Adrenal gland (tissue), 19 donors: ENCODE measurements at regions of chr10 and their contacts with region 1.

Region 1: GRCh38 chr10:98467506-98468346 is 21.0 kb upstream of the HPS1 start:
- DNase-seq: peak; percentile 71 to 86 (median 79)
- H3K4me3 ChIP-seq: peak overlapping the region in 2 of 4 donors; percentile 7 to 70
- H3K27ac ChIP-seq: no peak overlapping the region
- H3K4me1 ChIP-seq: peaks cover 6% of the 10 kb centered on the region in 2 donors
- H3K27me3 ChIP-seq: no peaks in the 10 kb centered on the region
- CTCF ChIP-seq: peak; percentile 63 to 91 (median 85)
- POLR2A ChIP-seq: no peak

Region 2: DNA sequence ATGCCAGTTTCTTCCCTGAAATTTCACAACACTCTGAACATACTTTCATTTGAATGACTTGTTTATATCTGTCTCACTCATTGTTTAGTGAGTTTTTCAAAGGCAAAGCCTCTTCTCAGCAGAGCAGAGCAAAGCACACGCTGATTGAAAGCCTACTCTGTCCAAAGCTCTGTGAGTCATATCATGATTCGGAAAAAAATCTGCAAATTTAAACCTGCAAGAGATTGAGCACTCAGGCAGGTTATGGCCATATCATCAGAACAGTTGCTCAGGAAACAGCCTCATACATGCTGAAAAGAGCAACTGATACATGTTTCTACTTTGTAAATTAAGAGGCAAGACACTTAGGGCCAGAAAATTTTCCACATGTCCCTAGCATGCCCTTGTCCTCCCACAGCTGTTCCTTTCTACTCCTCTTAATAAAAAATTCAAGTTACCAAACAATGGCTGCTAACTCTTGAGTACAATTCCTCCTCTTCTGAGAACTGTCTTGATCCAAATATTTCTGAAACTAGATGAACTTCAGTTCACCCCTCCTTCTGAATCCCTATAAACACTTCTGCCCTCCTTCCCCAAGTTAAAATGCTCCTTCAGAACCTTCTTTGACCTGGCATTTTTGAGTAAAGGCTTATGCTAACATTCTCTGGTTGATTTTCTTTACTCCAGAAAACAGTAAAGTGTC is 119.6 kb after region 1 on chr10:
- intact Hi-C with region 1: no loop called
- DNase-seq: no peak
- H3K4me3 ChIP-seq: no peak overlapping the region
- H3K27ac ChIP-seq: peak overlapping the region in 2 of 5 donors; percentile 6 to 71
- H3K4me1 ChIP-seq: no peaks in the 10 kb centered on the region
- H3K27me3 ChIP-seq: no peaks in the 10 kb centered on the region
- CTCF ChIP-seq: no peak
- POLR2A ChIP-seq: no peak

Region 3: DNA sequence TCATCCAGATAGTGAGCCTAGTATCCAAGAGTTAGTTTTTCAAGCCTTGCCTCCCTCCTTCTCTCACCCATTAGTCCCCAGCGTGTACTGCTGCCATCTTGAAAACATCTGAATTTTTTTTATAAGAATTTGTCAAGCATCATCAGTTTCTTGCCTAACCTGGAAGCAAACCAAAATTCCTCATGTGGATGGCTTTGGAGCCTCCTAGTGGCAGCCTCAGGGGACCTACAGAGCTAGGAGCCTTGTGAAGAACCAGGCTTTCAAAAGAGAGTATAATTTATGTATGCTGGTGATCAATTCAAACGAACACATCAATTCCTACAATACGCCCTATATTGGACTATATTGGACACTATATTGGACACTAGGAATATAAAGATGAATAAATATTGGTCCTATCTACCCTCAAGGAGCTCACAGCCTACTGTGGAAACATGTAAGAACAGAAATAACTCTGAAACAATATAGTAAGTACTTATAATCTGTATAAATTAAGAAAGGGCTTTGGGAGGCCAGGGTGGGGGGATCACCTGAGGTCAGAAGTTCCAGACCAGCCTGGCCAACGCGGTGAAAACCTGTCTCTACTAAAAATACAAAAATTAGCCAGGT is 704.5 kb after region 1 on chr10:
- intact Hi-C with region 1: loop called in 1 of 2 experiments (anchors 10 kb)
- DNase-seq: peak; percentile 25 to 75 (median 33)
- H3K4me3 ChIP-seq: no peak overlapping the region
- H3K27ac ChIP-seq: no peak overlapping the region
- H3K4me1 ChIP-seq: no peaks in the 10 kb centered on the region
- H3K27me3 ChIP-seq: peaks cover 4% of the 10 kb centered on the region
- CTCF ChIP-seq: peak; percentile 12 to 53 (median 41)
- POLR2A ChIP-seq: no peak

Region 4: GRCh38 chr10:99248824-99249223 is 781.1 kb after region 1 on chr10:
- intact Hi-C with region 1: loop called (anchors 5 to 10 kb)
- DNase-seq: no peak
- H3K4me3 ChIP-seq: no peak overlapping the region
- H3K27ac ChIP-seq: no peak overlapping the region
- H3K4me1 ChIP-seq: no peaks in the 10 kb centered on the region
- H3K27me3 ChIP-seq: no peaks in the 10 kb centered on the region
- CTCF ChIP-seq: no peak
- POLR2A ChIP-seq: no peak